Mammary epithelial cell (primary cell): ENCODE measurements at regions of chr1 and their contacts with region 1.

Region 1: GRCh38 chr1:226603022-226603857 is 54.7 kb downstream of the STUM start:
- DNase-seq: peak; percentile 51
- H3K4me3 ChIP-seq: peak overlapping the region in 1 of 3 experiments; percentile 16
- H3K27ac ChIP-seq: peak overlapping the region; percentile 61
- H3K4me1 ChIP-seq: peaks cover 24% of the 10 kb centered on the region
- H3K27me3 ChIP-seq: no peaks in the 10 kb centered on the region
- CTCF ChIP-seq: no peak

Region 2: GRCh38 chr1:226496453-226497015 is 106.7 kb before region 1 on chr1:
- CTCF ChIA-PET with region 1: no interaction called
- dilution Hi-C with region 1: loop called (anchors 5 kb)
- in situ Hi-C with region 1: no loop called
- intact Hi-C with region 1: no loop called
- DNase-seq: no peak
- H3K4me3 ChIP-seq: no peak overlapping the region
- H3K27ac ChIP-seq: no peak overlapping the region
- H3K4me1 ChIP-seq: no peaks in the 10 kb centered on the region
- H3K27me3 ChIP-seq: no peaks in the 10 kb centered on the region
- CTCF ChIP-seq: no peak

Region 3: DNA sequence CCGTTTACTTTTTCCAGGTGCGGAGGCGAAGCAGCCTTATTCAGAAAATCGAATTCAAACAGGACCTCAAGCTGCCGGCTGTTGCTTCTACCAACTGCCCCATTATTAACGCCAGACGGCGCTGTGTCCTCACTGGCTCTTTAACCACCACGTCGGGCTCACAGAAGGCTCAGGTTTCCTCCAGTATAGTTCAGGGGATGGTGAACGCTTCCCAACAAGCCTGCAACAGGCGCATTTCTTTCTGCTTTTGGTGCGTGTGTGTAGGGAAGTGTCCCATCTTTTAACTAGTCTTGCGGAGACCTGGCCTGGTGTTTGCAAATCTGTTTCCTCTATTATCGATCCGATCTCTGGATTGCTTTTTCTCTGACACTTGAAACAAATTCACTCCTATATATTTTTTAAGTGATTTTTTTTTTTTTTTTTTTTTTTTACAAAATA is 55.5 kb before region 1 on chr1:
- CTCF ChIA-PET with region 1: no interaction called
- dilution Hi-C with region 1: no loop called
- in situ Hi-C with region 1: no loop called
- intact Hi-C with region 1: loop called (anchors 1 kb)
- DNase-seq: peak; percentile 81
- H3K4me3 ChIP-seq: no peak overlapping the region
- H3K27ac ChIP-seq: no peak overlapping the region
- H3K4me1 ChIP-seq: peaks cover 21% of the 10 kb centered on the region
- H3K27me3 ChIP-seq: peaks cover 12% of the 10 kb centered on the region
- CTCF ChIP-seq: peak; percentile 98 to 99

Region 4: GRCh38 chr1:226671290-226671689 is 68.0 kb after region 1 on chr1:
- CTCF ChIA-PET with region 1: no interaction called
- dilution Hi-C with region 1: no loop called
- in situ Hi-C with region 1: no loop called
- intact Hi-C with region 1: no loop called
- DNase-seq: no peak
- H3K4me3 ChIP-seq: no peak overlapping the region
- H3K27ac ChIP-seq: no peak overlapping the region
- H3K4me1 ChIP-seq: peaks cover 3% of the 10 kb centered on the region
- H3K27me3 ChIP-seq: no peaks in the 10 kb centered on the region
- CTCF ChIP-seq: no peak